HCT116 (cell line): ENCODE measurements at regions of chr21 and their contacts with region 1.

Region 1: DNA sequence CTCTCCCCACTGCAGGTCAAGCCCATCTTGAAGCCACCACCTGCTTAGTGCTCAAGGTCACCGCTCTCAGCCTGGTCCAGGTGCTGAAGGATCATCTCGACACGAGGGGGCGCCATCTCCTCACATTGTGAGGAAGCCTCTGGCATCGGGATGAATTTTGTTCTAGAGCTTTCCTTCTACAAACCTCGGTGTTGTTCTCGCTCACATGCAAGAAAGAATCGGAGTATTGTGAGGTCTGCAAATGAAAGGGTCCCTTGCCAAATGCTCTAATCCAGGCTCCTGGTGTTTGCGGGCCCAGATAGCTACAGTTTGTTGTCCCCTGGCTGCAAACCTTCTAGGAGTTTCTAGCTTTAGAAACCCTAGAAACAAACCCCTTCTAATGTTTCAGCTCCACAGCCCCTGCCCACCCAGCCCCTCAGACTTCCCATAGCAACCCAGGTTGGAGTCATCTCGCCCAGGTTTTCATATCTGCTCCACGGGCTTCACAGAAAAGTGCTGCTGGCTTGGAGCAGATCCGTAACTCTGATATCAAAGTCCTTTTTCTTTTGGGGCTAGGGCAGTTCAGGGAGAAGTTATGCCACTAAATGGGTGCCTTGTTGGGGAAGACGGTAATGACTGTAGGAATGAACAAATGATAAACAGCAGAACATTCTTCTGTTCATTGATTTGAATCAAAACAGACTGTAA is 8.6 kb upstream of the ATP5PO start:
- DNase-seq: peak; percentile 69
- ATAC-seq: peak; percentile 99
- H3K4me3 ChIP-seq: no peak overlapping the region
- H3K27ac ChIP-seq: no peak overlapping the region
- H3K4me1 ChIP-seq: peaks cover 0 to 10% of the 10 kb centered on the region in 2 experiments; a peak in 2 of 4 replicates
- H3K27me3 ChIP-seq: no peaks in the 10 kb centered on the region
- CTCF ChIP-seq: peak; percentile 83 to 96 (median 88)
- POLR2A ChIP-seq: no peak
- RAD21 ChIP-seq: peak; percentile 96

Region 2: GRCh38 chr21:33470701-33471100 is 453.5 kb before region 1 on chr21:
- CTCF ChIA-PET with region 1: no interaction called
- POLR2A ChIA-PET with region 1: no interaction called
- RAD21 ChIA-PET with region 1: no interaction called
- intact Hi-C with region 1: no loop called
- DNase-seq: no peak
- ATAC-seq: no peak
- H3K4me3 ChIP-seq: no peak overlapping the region
- H3K27ac ChIP-seq: no peak overlapping the region
- H3K4me1 ChIP-seq: no peaks in the 10 kb centered on the region
- H3K27me3 ChIP-seq: no peaks in the 10 kb centered on the region
- CTCF ChIP-seq: no peak
- POLR2A ChIP-seq: no peak
- RAD21 ChIP-seq: no peak

Region 3: GRCh38 chr21:33655591-33656221 is 268.5 kb before region 1 on chr21:
- CTCF ChIA-PET with region 1: no interaction called
- POLR2A ChIA-PET with region 1: no interaction called
- RAD21 ChIA-PET with region 1: no interaction called
- intact Hi-C with region 1: no loop called
- DNase-seq: peak; percentile 96
- ATAC-seq: peak; percentile 97
- H3K4me3 ChIP-seq: peak overlapping the region in 1 of 2 experiments; percentile 39; a peak in 2 of 4 replicates
- H3K27ac ChIP-seq: peak overlapping the region; percentile 89
- H3K4me1 ChIP-seq: peaks cover 35 to 45% of the 10 kb centered on the region in 2 experiments
- H3K27me3 ChIP-seq: no peaks in the 10 kb centered on the region
- CTCF ChIP-seq: no peak
- POLR2A ChIP-seq: no peak
- RAD21 ChIP-seq: no peak

Region 4: GRCh38 chr21:33947451-33948095 is 23.4 kb after region 1 on chr21:
- CTCF ChIA-PET with region 1: interaction called, 15 read pairs
- POLR2A ChIA-PET with region 1: no interaction called
- RAD21 ChIA-PET with region 1: interaction called in 1 of 2 experiments, 3 read pairs
- intact Hi-C with region 1: no loop called
- DNase-seq: peak; percentile 93
- ATAC-seq: peak; percentile 93
- H3K4me3 ChIP-seq: peak overlapping the region; percentile 34 to 52
- H3K27ac ChIP-seq: peak overlapping the region; percentile 86
- H3K4me1 ChIP-seq: peaks cover 32 to 43% of the 10 kb centered on the region in 2 experiments
- H3K27me3 ChIP-seq: no peaks in the 10 kb centered on the region
- CTCF ChIP-seq: no peak
- POLR2A ChIP-seq: no peak
- RAD21 ChIP-seq: peak; percentile 33; the same call in 1 of the 2 replicates

Region 5: GRCh38 chr21:34190576-34191321 is 266.5 kb after region 1 on chr21:
- CTCF ChIA-PET with region 1: no interaction called
- POLR2A ChIA-PET with region 1: no interaction called
- RAD21 ChIA-PET with region 1: no interaction called
- intact Hi-C with region 1: no loop called
- DNase-seq: no peak
- ATAC-seq: no peak
- H3K4me3 ChIP-seq: no peak overlapping the region
- H3K27ac ChIP-seq: no peak overlapping the region
- H3K4me1 ChIP-seq: no peaks in the 10 kb centered on the region
- H3K27me3 ChIP-seq: no peaks in the 10 kb centered on the region
- CTCF ChIP-seq: no peak
- POLR2A ChIP-seq: no peak
- RAD21 ChIP-seq: no peak

Region 6: DNA sequence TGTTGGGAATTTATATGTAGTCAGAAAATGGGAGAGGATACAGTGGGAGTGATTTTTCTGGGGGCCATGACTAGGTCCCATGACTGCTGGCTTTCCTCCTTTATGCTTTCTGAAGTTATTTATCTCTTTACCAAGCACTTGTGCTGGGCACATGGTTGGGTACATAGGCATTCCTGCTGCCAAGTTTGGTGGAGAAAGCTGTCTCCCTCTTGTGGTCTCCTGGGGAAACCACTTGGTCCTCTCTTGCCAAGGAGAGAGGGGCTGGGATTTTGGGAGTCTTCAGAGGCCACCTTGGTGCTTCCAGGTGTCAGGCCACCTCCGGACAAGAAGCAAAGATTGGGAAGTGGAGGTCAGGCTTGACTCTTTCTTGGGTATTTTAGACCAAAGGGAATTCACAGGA is 319.3 kb after region 1 on chr21:
- CTCF ChIA-PET with region 1: interaction called, 36 read pairs
- POLR2A ChIA-PET with region 1: no interaction called
- RAD21 ChIA-PET with region 1: no interaction called
- intact Hi-C with region 1: loop called (anchors 2 kb)
- DNase-seq: peak; percentile 19
- ATAC-seq: peak; percentile 86
- H3K4me3 ChIP-seq: no peak overlapping the region
- H3K27ac ChIP-seq: no peak overlapping the region
- H3K4me1 ChIP-seq: no peaks in the 10 kb centered on the region
- H3K27me3 ChIP-seq: no peaks in the 10 kb centered on the region
- CTCF ChIP-seq: peak; percentile 46 to 85 (median 70); a peak in 5 of 6 replicates
- POLR2A ChIP-seq: no peak
- RAD21 ChIP-seq: peak; percentile 69

Region 7: DNA sequence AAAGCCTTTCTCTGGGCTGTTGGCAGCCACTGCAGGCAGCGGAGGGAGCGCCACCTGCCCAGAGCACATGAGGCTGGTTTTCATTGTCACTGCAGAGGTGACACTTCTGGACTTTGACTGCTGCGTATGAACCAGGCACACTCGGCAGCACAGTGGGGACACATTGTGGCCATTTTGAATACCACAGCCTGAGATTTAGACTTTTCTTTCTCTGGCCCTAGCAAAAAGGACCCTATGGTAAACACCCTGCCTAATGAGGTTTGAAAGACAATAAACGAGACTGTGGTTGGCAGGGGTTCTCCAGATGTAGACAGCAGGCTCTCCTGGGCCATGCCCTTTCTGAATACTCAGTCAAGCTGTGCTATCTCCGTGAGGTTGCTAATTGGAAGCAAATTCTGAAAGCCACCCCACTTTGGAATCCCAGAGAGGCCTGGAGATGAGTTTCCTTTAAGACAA is 427.6 kb after region 1 on chr21:
- CTCF ChIA-PET with region 1: interaction called, 236 read pairs
- POLR2A ChIA-PET with region 1: interaction called, 12 read pairs
- RAD21 ChIA-PET with region 1: interaction called, 30 to 37 read pairs
- intact Hi-C with region 1: loop called (anchors 1 kb)
- DNase-seq: peak; percentile 48
- ATAC-seq: peak; percentile 92
- H3K4me3 ChIP-seq: no peak overlapping the region
- H3K27ac ChIP-seq: no peak overlapping the region
- H3K4me1 ChIP-seq: peaks cover 0 to 4% of the 10 kb centered on the region in 2 experiments; a peak in 1 of 4 replicates
- H3K27me3 ChIP-seq: no peaks in the 10 kb centered on the region
- CTCF ChIP-seq: peak; percentile 63 to 70 (median 68); a peak in 5 of 6 replicates
- POLR2A ChIP-seq: no peak
- RAD21 ChIP-seq: peak; percentile 80

Region 8: GRCh38 chr21:34367321-34367935 is 443.2 kb after region 1 on chr21:
- CTCF ChIA-PET with region 1: interaction called, 14 read pairs
- POLR2A ChIA-PET with region 1: no interaction called
- RAD21 ChIA-PET with region 1: no interaction called
- intact Hi-C with region 1: no loop called
- DNase-seq: peak; percentile 54
- ATAC-seq: peak; percentile 91
- H3K4me3 ChIP-seq: no peak overlapping the region
- H3K27ac ChIP-seq: no peak overlapping the region
- H3K4me1 ChIP-seq: peaks cover 0 to 3% of the 10 kb centered on the region in 2 experiments; a peak in 2 of 4 replicates
- H3K27me3 ChIP-seq: no peaks in the 10 kb centered on the region
- CTCF ChIP-seq: peak; percentile 44 to 80 (median 78); a peak in 5 of 6 replicates
- POLR2A ChIP-seq: no peak
- RAD21 ChIP-seq: peak; percentile 57